ENCODE measurements at regions of chr17 and their contacts with region 1.

Region 1: GRCh38 chr17:39687811-39688518 is at the start of gene PGAP3:
- DNase-seq: peak; percentile 83 to 86 (median 83)
- H3K4me3 ChIP-seq: peak within 1 kb of the TSS; percentile 59 to 90
- H3K4me3 Mint-ChIP-seq: peak within 1 kb of the TSS; percentile 95 to 99 (median 98)
- H3K27ac ChIP-seq: peak within 1 kb of the TSS; percentile 67
- H3K27ac Mint-ChIP-seq: peak within 1 kb of the TSS; percentile 94 to 99 (median 98)
- H3K4me1 ChIP-seq: peaks cover 21% of the 10 kb centered on the region
- H3K4me1 Mint-ChIP-seq: peaks cover 19 to 33% (median 28%) of the 10 kb centered on the region in 4 donors
- H3K27me3 ChIP-seq: no peaks in the 10 kb centered on the region
- H3K27me3 Mint-ChIP-seq: no peaks in the 10 kb centered on the region
- total RNA-seq, gene PGAP3: 29.6 to 30.5 TPM

Region 2: DNA sequence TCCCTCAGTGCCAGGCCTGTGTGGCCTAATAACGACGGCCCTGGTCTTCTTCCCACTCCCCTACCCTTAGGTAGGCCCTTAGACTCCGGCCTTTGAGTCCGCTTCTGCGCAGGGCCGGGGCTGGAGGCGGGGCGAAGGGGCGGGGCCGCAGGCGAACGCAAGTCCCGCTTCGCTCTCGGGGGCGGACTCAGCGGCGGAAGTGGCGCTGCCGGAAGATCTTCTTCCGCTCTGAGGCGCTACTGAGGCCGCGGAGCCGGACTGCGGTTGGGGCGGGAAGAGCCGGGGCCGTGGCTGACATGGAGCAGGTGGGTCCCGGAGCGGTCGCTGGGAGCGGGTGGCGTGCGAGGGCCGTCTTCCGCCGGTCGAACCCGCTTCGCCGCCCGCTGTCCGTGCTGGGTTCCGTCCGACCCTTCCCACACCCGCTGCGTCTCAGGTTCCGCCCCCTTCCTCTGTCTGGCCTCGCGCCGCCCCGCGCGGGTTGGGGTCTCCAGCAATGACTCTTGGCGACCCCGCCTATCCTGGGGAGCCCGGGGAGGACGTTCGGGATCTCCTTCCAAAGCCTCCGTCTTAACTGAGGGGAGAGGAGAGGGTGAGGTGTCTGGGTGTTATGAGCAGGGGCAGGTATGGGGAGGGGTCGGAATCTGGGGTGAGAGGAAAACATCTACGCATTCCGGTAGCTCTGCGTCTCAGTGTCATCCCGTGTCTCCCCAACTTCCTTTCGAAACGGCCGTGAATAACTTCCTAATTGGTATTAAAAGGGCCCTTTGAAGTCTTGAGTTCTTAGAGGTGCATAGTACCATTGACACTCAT is 50.8 kb before region 1 on chr17 and contains the start of gene STARD3:
- CTCF ChIA-PET with region 1: interaction called, 8 read pairs
- POLR2A ChIA-PET with region 1: interaction called, 6 read pairs
- intact Hi-C with region 1: loop called (anchors 5 kb)
- DNase-seq: peak; percentile 85 to 92 (median 87)
- H3K4me3 ChIP-seq: peak within 1 kb of the TSS; percentile 86 to 88
- H3K4me3 Mint-ChIP-seq: peak within 1 kb of the TSS; percentile 92 to 98 (median 96)
- H3K27ac ChIP-seq: peak within 1 kb of the TSS; percentile 97
- H3K27ac Mint-ChIP-seq: peak within 1 kb of the TSS; percentile 84 to 98 (median 96)
- H3K4me1 ChIP-seq: peaks cover 61% of the 10 kb centered on the region
- H3K4me1 Mint-ChIP-seq: peaks cover 33 to 62% (median 49%) of the 10 kb centered on the region in 4 donors
- H3K27me3 ChIP-seq: no peaks in the 10 kb centered on the region
- H3K27me3 Mint-ChIP-seq: peaks cover 0 to 1% of the 10 kb centered on the region in 2 donors
- total RNA-seq, gene STARD3: 105 to 110 TPM

Region 3: DNA sequence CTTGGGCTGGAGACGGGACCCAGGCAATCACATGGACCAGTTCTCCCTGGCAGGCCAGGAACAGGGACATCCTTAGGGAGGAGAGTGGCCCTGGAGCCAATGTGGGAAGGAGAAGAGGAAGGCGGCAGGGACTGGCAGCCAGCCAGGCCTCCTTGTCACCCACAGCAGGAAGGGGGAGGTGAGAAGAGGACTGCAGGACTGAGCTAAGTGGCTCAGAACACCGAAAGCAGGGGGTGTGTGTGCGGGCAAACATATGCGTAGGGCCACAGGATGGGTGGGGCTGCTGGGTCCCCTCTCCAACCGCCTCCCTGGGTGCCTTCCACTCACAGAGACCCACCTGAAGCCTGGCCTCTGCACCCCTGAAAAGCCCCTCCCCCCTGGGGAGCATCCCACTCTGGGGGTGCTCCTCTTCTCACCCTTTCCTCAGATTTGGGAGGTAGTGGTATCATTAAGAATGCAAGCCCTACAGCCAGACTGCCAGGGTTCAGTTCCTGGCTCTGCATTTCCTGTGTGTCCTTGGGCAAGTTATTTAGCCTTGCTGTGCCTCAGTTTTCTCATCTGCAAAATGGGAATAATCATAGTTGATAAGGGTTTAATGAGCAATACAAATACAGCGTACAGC is 11.7 kb before region 1 on chr17:
- CTCF ChIA-PET with region 1: interaction called, 5 read pairs
- POLR2A ChIA-PET with region 1: interaction called, 45 read pairs
- intact Hi-C with region 1: loop called (anchors 1 kb)
- DNase-seq: peak; percentile 54 to 72 (median 69)
- H3K4me3 ChIP-seq: no peak overlapping the region
- H3K4me3 Mint-ChIP-seq: peak overlapping the region in 7 of 8 donors; percentile 21 to 77 (median 70)
- H3K27ac ChIP-seq: peak overlapping the region; percentile 6
- H3K27ac Mint-ChIP-seq: peak overlapping the region; percentile 77 to 97 (median 92)
- H3K4me1 ChIP-seq: peaks cover 61% of the 10 kb centered on the region
- H3K4me1 Mint-ChIP-seq: peaks cover 44 to 70% (median 58%) of the 10 kb centered on the region in 4 donors
- H3K27me3 ChIP-seq: no peaks in the 10 kb centered on the region
- H3K27me3 Mint-ChIP-seq: no peaks in the 10 kb centered on the region

Measured in CD4-positive, alpha-beta memory T cell (primary cell).